ENCODE measurements at regions of chr4 and their contacts with region 1.

Region 1: GRCh38 chr4:93791570-93792195 is 36.9 kb upstream of the ATOH1 start:
- DNase-seq: peak in 2 of 3 donors; percentile 18 to 59
- ATAC-seq: peak; percentile 57 to 76
- H3K4me3 ChIP-seq: no peak overlapping the region
- H3K27ac ChIP-seq: no peak overlapping the region
- H3K4me1 ChIP-seq: no peaks in the 10 kb centered on the region
- H3K27me3 ChIP-seq: no peaks in the 10 kb centered on the region

Region 2: DNA sequence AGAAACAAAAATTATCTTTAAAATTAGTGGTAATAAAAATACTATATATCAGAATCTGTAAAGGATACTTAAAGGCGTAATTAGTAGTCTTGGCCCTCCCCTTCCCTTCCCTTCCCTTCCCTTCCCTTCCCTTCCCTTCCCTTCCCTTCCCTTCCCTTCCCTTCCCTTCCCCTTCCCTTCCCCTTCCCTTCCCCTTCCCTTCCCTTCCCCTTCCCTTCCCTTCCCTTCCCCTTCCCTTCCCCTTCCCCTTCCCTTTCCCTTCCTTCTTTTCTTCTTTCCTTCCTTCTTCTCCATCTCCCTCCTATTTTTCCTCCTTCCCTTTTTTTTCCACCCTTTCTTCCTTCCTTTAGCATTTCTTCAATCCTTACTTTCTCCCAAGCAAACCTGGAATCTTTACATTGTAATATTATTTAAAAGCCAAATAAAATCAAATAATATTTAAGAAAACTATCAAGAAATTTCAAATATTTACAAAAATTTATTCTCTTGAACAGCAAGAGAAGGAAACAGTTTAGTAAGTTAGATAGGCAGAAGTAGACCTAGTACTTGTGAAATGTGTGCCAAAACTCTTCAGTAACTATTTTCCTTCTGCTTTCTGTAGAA is 342.9 kb before region 1 on chr4:
- intact Hi-C with region 1: no loop called
- DNase-seq: no peak
- ATAC-seq: no peak
- H3K4me3 ChIP-seq: no peak overlapping the region
- H3K27ac ChIP-seq: no peak overlapping the region
- H3K4me1 ChIP-seq: no peaks in the 10 kb centered on the region
- H3K27me3 ChIP-seq: no peaks in the 10 kb centered on the region

Region 3: DNA sequence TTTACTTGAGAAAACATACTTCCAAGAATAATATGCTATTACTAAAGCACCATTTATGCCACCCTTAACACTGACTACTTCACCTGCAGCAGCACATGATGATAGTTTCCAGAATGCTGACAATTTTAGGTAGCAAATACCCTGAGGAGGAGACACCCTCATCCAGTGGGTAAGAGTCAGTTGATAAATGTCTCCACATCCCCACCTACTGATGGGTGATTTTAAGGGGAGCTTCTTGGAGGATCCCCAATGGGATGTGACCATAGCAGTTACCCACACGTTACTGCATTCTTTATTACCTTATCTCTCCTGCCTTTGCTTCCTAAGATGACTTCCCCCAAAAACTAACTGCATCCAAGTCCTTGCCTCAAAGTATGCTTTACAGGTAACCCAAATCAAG is 284.8 kb after region 1 on chr4:
- intact Hi-C with region 1: no loop called
- DNase-seq: no peak
- ATAC-seq: no peak
- H3K4me3 ChIP-seq: no peak overlapping the region
- H3K27ac ChIP-seq: no peak overlapping the region
- H3K4me1 ChIP-seq: no peaks in the 10 kb centered on the region
- H3K27me3 ChIP-seq: no peaks in the 10 kb centered on the region

Region 4: GRCh38 chr4:94127707-94128328 is 336.1 kb after region 1 on chr4:
- intact Hi-C with region 1: loop called in 2 of 4 experiments (anchors 5 kb)
- DNase-seq: no peak
- ATAC-seq: no peak
- H3K4me3 ChIP-seq: no peak overlapping the region
- H3K27ac ChIP-seq: no peak overlapping the region
- H3K4me1 ChIP-seq: no peaks in the 10 kb centered on the region
- H3K27me3 ChIP-seq: no peaks in the 10 kb centered on the region